Posterior cingulate gyrus (tissue), 11 donors: ENCODE measurements at regions of chr11 and their contacts with region 1.

Region 1: GRCh38 chr11:12673924-12674570 is at the start of gene TEAD1:
- DNase-seq: peak; percentile 92 to 100 (median 98)

Region 2: DNA sequence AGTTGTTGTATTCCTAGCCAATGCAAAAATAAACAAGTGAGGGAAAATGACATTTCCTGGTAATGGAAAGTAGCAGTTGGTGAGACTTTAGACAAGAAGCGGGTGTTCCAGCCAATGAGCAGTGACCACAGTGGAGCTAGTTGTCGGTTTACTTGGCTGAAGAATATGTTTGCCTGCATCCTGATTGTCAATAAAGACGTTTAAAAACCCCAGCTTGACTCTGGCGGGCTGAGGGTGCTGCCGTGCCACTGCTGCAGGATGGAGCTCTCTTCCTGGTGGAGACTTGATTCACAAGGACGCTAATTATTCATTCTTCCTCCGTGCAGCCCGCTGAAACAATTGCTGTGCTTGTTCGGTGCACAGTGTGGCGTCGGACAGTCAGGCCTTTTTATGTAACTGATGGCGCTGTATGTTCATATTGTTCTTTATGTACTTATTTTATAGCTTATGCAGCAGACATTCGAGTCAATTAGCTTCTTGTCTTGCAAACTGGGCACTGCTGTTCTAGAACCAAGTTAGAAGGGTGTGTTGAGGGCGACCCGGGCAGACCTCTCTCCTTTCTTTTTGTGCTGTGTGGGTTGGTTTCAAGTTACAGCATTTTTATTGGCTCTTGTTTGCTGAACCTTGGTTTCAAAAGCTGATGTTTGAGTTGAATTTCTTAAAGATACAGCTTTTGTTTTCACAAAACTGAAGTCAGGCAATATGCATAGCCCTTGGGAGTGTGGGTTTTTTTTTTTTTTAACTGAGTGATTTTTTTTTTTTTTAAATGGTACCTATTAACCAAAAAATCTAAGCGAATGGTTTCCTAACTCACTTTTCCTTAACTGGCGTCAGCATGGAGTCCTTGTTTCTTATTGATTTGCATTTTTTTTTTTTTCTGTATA is 154.1 kb after region 1 on chr11:
- intact Hi-C with region 1: loop called (anchors 10 kb)
- DNase-seq: peak in 7 of 10 donors; percentile 18 to 86 (median 44)

Region 3: GRCh38 chr11:12888525-12889158 is 214.6 kb after region 1 on chr11:
- intact Hi-C with region 1: loop called (anchors 5 kb)
- DNase-seq: peak in 8 of 10 donors; percentile 35 to 92 (median 78)